ENCODE measurements at regions of chr6 and their contacts with region 1.

Region 1: DNA sequence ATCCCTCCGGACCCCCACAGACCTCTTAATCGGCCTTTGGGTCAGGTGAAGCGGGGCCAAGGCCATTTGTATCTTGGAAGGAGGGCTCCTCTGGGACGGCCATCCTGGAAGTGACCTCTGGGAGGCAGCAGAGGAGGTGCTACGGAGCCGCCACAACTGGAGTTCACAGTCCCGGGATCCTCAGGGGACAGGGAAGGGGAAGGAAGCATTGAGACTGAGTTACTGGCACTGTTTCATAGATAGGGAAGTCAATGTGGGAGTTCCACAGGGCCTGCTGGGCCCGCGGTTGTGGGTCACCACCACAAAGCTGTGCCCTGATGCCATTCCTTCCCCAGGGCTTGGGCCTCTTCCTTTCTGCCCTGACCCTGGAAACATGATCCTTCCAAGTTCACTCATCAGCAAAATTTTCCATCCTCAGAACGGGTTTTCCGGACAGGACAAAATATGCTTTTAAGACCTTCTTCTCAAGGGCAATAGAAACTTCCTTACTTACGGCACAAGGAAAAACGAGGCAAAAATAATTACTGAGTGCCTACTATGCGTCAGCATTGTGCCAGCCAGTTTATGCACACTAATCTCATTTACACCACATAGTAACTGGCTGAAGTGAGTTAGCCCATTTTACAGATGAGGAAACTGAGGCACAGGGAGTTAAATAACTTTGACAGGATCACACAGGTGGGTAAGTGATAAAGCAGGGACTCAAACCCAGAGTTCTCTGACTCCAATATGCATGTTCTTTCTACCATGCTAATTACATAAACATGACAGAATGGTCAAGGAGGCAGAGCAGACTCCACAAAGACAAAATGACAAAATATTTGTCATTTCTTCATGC is 143.8 kb downstream of the UNC5CL start:
- DNase-seq: no peak
- ATAC-seq: peak; percentile 95
- H3K4me3 ChIP-seq: no peak overlapping the region
- H3K27ac ChIP-seq: peak overlapping the region; percentile 89
- H3K4me1 ChIP-seq: peaks cover 29% of the 10 kb centered on the region
- H3K27me3 ChIP-seq: no peaks in the 10 kb centered on the region
- CTCF ChIP-seq: peak; percentile 83

Region 2: GRCh38 chr6:40852779-40853373 is 42.3 kb before region 1 on chr6:
- CTCF ChIA-PET with region 1: no interaction called
- POLR2A ChIA-PET with region 1: no interaction called
- in situ Hi-C with region 1: no loop called
- intact Hi-C with region 1: no loop called
- DNase-seq: no peak
- ATAC-seq: no peak
- H3K4me3 ChIP-seq: no peak overlapping the region
- H3K27ac ChIP-seq: no peak overlapping the region
- H3K4me1 ChIP-seq: no peaks in the 10 kb centered on the region
- H3K27me3 ChIP-seq: no peaks in the 10 kb centered on the region
- CTCF ChIP-seq: peak; percentile 55

Region 3: DNA sequence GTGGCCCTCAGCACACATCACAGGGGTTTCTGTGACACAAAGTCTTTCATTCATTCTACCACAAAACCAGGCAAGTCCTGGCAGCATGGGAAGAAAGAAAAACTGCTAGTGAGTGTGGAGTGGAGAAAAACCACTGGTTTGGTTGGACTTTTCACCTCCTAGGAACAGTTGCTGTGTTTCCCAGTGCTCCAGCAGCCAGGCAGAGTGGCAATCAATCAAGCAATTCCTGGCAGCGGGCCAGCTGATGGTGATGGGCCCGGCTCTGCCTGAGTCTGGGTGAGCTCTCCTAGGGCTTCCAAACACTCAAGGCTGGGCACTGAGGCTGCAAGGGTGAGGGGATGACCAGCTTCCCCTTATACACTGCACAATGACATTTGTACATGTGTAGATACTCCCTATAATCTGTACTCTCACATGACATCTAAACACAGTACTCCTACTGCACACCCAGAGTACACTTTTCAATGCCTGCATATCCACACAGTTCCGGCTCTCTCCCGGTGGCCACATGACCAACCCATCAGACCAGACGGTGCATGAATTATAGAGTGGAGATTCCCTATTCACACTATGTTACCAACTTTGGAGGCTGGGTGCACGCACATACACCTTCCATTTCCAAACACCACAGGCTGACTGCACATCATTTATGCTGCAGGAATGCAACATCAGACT is 12.7 kb before region 1 on chr6:
- CTCF ChIA-PET with region 1: no interaction called
- POLR2A ChIA-PET with region 1: no interaction called
- in situ Hi-C with region 1: no loop called
- intact Hi-C with region 1: no loop called
- DNase-seq: no peak
- ATAC-seq: 0 out of 2 replicates have a peak, but pooled peaks have one; percentile 12
- H3K4me3 ChIP-seq: no peak overlapping the region
- H3K27ac ChIP-seq: no peak overlapping the region
- H3K4me1 ChIP-seq: no peaks in the 10 kb centered on the region; the same call in 1 of the 2 replicates
- H3K27me3 ChIP-seq: no peaks in the 10 kb centered on the region
- CTCF ChIP-seq: no peak

Region 4: DNA sequence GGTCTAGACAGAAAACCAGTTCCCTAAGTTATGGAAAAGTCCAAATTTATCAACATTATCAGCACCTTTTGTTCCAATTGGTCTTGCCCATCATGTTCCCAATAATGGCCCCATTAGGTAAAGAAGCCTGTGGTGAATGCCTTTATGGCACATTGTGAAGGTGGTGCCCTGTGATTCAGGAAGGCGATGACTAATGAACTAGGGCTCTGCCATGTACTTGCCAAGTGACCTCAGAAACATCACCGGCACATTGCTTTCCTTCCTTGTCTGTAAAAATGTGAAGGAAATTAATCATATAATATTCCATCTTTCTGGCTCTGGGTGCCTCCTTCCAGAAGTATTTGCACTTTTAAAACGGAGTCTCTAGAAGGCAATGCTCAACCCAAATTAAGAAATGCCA is 11.6 kb after region 1 on chr6:
- CTCF ChIA-PET with region 1: no interaction called
- POLR2A ChIA-PET with region 1: no interaction called
- in situ Hi-C with region 1: no loop called
- intact Hi-C with region 1: no loop called
- DNase-seq: peak; percentile 59
- ATAC-seq: peak; percentile 87
- H3K4me3 ChIP-seq: no peak overlapping the region
- H3K27ac ChIP-seq: peak overlapping the region; percentile 85
- H3K4me1 ChIP-seq: peaks cover 33% of the 10 kb centered on the region
- H3K27me3 ChIP-seq: no peaks in the 10 kb centered on the region
- CTCF ChIP-seq: no peak

Region 5: DNA sequence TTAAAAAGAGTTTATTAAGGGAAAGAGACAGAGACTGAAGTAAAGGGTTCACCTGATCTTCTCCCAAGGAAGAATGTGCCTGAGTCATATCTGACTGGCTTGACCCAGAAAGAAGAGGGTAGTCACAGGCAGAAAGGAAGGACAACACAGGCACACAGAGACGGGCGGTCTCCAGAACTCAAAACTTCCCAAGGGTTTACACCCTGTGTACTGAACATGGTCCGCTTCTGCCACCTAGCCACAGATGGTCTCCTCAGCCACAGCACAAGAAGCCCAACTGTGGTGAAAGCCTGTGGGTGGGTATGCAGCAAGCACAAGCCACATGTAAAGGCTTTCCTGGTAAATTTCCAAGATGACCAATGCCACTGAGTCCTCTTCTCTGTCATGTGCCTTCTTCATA is 126.7 kb after region 1 on chr6:
- CTCF ChIA-PET with region 1: interaction called, 3 read pairs
- POLR2A ChIA-PET with region 1: no interaction called
- in situ Hi-C with region 1: no loop called
- intact Hi-C with region 1: loop called (anchors 1 kb)
- DNase-seq: no peak
- ATAC-seq: peak; percentile 84
- H3K4me3 ChIP-seq: no peak overlapping the region
- H3K27ac ChIP-seq: peak overlapping the region; percentile 91
- H3K4me1 ChIP-seq: peaks cover 38% of the 10 kb centered on the region
- H3K27me3 ChIP-seq: no peaks in the 10 kb centered on the region
- CTCF ChIP-seq: peak; percentile 63

Region 6: GRCh38 chr6:41027799-41028628 is 132.8 kb after region 1 on chr6:
- CTCF ChIA-PET with region 1: interaction called, 3 read pairs
- POLR2A ChIA-PET with region 1: no interaction called
- in situ Hi-C with region 1: no loop called
- intact Hi-C with region 1: loop called (anchors 1 kb)
- DNase-seq: no peak
- ATAC-seq: peak; percentile 93
- H3K4me3 ChIP-seq: peak overlapping the region; percentile 14 to 55; a peak in 3 of 4 replicates
- H3K27ac ChIP-seq: peak overlapping the region; percentile 91
- H3K4me1 ChIP-seq: peaks cover 20% of the 10 kb centered on the region
- H3K27me3 ChIP-seq: no peaks in the 10 kb centered on the region
- CTCF ChIP-seq: peak; percentile 97